ENCODE measurements at regions of chr16 and their contacts with region 1.

Region 1: GRCh38 chr16:81778861-81779535 is at the start of gene PLCG2:
- DNase-seq: peak; percentile 7 to 21
- ATAC-seq: peak; percentile 45 to 49
- H3K4me3 ChIP-seq: peak within 1 kb of the TSS; percentile 46 to 55 (median 50)
- H3K27ac ChIP-seq: peak within 1 kb of the TSS in 2 of 4 donors; percentile 13 to 30
- H3K4me1 ChIP-seq: peaks cover 0 to 4% of the 10 kb centered on the region in 2 donors
- H3K27me3 ChIP-seq: peaks cover 4 to 18% (median 9%) of the 10 kb centered on the region in 3 donors
- CTCF ChIP-seq: no peak
- POLR2A ChIP-seq: peak; percentile 16 to 48
- total RNA-seq, gene PLCG2: 1.8 to 3.0 (median 2.1) TPM

Region 2: GRCh38 chr16:81686391-81687130 is 92.4 kb before region 1 on chr16:
- in situ Hi-C with region 1: no loop called
- intact Hi-C with region 1: no loop called
- DNase-seq: no peak
- ATAC-seq: peak in 1 of 2 donors; percentile 46
- H3K4me3 ChIP-seq: no peak overlapping the region
- H3K27ac ChIP-seq: peak overlapping the region in 1 of 4 donors; percentile 22
- H3K4me1 ChIP-seq: no peaks in the 10 kb centered on the region
- H3K27me3 ChIP-seq: no peaks in the 10 kb centered on the region
- CTCF ChIP-seq: no peak
- POLR2A ChIP-seq: no peak

Region 3: GRCh38 chr16:81863630-81864352 is 84.8 kb after region 1 on chr16:
- in situ Hi-C with region 1: no loop called
- intact Hi-C with region 1: loop called (anchors 10 kb)
- DNase-seq: no peak
- ATAC-seq: no peak
- H3K4me3 ChIP-seq: no peak overlapping the region
- H3K27ac ChIP-seq: no peak overlapping the region
- H3K4me1 ChIP-seq: no peaks in the 10 kb centered on the region
- H3K27me3 ChIP-seq: peaks cover 0 to 4% (median 0%) of the 10 kb centered on the region in 3 donors
- CTCF ChIP-seq: no peak
- POLR2A ChIP-seq: no peak